Motor neuron (in vitro differentiated cells): ENCODE measurements at regions of chr5 and their contacts with region 1.

Region 1: DNA sequence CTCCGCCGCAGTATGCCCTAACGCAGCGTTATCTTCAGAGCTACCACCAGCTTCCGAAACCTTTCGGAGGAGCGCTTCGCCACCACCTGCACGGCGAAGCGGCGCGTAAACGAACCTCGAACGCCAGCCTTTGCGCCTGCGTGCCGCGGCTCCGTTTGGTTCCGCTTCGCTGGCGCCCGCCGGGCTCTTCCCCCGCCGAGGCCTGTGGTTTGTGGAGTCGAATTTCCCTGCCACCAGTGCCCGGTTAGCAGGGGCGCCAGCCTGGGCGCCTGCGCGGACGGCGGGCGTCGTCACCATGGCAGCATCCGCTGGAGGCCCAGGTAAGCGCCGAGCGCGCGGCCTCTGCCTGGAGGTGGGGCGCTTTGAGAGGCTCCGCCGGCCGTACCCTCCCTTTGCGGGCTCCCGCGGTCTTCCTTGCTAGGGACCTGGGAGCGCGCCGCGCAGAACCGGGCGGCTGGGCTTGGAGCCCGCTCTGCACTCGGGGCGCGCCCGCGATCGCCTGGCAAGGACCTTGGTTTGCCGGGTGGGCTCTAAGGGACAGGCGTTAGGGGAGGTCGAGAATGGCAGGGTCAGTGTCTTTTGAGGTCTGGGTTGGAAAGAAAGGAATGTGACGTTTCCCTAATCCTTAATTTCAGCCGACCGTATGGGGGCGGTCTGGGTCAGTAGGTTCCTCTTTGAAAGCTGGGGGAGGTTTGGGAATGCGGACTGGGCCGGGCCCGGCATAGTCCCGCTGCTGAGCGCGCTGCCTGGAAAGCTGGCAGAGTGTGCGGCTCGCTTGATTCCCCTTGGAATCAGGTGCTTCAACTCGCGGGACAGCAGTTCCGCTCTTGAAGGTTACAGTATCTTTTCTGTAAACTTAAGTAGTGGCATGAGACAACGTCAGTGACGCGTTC is at the start of gene FAM151B:
- ATAC-seq: peak; percentile 85 to 98 (median 94)
- H3K4me3 ChIP-seq: peak within 1 kb of the TSS; percentile 46 to 60 (median 53)
- H3K27ac ChIP-seq: peak within 1 kb of the TSS; percentile 14 to 38
- H3K4me1 ChIP-seq: no peaks in the 10 kb centered on the region
- total RNA-seq, gene FAM151B: 1.7 to 5.1 (median 2.2) TPM

Region 2: GRCh38 chr5:80654391-80655230 is 166.5 kb after region 1 on chr5 and contains the starts of genes DHFR and MSH3:
- in situ Hi-C with region 1: loop called in 3 of 9 experiments (anchors 25 kb)
- ATAC-seq: peak; percentile 89 to 95 (median 94)
- H3K4me3 ChIP-seq: peak within 1 kb of the TSS; percentile 52 to 97 (median 84)
- H3K27ac ChIP-seq: peak within 1 kb of the TSS; percentile 84 to 95
- H3K4me1 ChIP-seq: peaks cover 3 to 16% of the 10 kb centered on the region in 2 donors
- total RNA-seq, gene DHFR: 7.2 to 87.3 (median 16.4) TPM
- total RNA-seq, gene MSH3: 9.7 to 25.1 (median 15.7) TPM

Region 3: DNA sequence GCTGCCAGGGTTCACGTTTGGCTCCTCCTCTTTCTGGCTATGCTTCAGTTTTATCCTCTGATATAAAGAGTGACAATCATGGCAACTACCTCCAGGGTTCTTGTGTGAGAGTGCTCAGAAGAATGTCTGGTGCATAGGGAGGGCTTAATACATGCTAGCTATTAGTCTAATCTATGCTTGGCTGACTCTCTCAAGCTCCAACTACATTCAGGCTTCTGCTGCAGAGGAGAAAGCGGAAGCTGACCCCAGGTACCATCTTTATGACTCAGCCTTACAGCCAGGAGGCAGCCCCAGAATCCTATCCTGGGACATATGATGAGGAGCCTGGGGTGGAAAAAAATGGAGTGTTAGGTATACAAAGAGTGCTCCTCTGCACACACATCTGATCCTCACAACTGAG is 440.0 kb after region 1 on chr5:
- in situ Hi-C with region 1: no loop called
- ATAC-seq: no peak
- H3K4me3 ChIP-seq: no peak overlapping the region
- H3K27ac ChIP-seq: no peak overlapping the region
- H3K4me1 ChIP-seq: peaks cover 0 to 6% of the 10 kb centered on the region in 2 donors